ENCODE measurements at regions of chr3 and their contacts with region 1.

Region 1: DNA sequence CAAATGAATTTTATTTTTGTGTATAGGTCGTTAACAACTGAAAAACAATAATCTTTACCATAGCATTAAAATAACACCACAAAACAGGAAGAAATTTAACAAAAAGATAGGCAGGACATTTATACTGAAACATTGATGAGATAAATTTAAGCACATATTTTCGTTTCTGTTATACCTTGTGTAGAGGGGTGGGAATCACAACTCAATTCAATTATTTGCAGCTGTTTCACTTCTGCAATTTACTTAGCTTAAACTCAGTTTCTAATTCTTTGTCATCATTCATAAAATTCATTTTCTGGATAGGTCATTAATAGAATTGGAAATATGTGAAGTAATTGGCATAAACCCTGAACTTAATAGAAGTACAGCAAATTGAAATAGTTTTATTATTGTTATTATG is 42.3 kb downstream of the TP63 start:
- DNase-seq: peak; percentile 42
- ATAC-seq: peak; percentile 93
- H3K4me3 ChIP-seq: no peak overlapping the region
- H3K27ac ChIP-seq: no peak overlapping the region
- H3K4me1 ChIP-seq: peaks cover 16% of the 10 kb centered on the region
- H3K27me3 ChIP-seq: no peaks in the 10 kb centered on the region
- CTCF ChIP-seq: no peak
- EP300 ChIP-seq: peak; percentile 62 to 72; a peak in 3 of 4 replicates
- POLR2A ChIP-seq: no peak
- RAD21 ChIP-seq: no peak

Region 2: GRCh38 chr3:189588070-189588820 is 85.3 kb before region 1 on chr3:
- CTCF ChIA-PET with region 1: interaction called, 3 read pairs
- POLR2A ChIA-PET with region 1: no interaction called
- RAD21 ChIA-PET with region 1: interaction called, 5 read pairs
- SMC1A ChIA-PET with region 1: interaction called, 3 read pairs
- in situ Hi-C with region 1: no loop called
- intact Hi-C with region 1: loop called (anchors 5 kb)
- DNase-seq: no peak
- ATAC-seq: no peak
- H3K4me3 ChIP-seq: no peak overlapping the region
- H3K27ac ChIP-seq: 0 out of 2 replicates have a peak overlapping the region, but pooled peaks have one; percentile 26
- H3K4me1 ChIP-seq: peaks cover 18% of the 10 kb centered on the region
- H3K27me3 ChIP-seq: no peaks in the 10 kb centered on the region
- CTCF ChIP-seq: no peak
- EP300 ChIP-seq: no peak
- POLR2A ChIP-seq: no peak
- RAD21 ChIP-seq: no peak

Region 3: GRCh38 chr3:189613122-189613521 is 60.4 kb before region 1 on chr3:
- CTCF ChIA-PET with region 1: no interaction called
- POLR2A ChIA-PET with region 1: no interaction called
- RAD21 ChIA-PET with region 1: no interaction called
- SMC1A ChIA-PET with region 1: no interaction called
- in situ Hi-C with region 1: no loop called
- intact Hi-C with region 1: no loop called
- DNase-seq: no peak
- ATAC-seq: no peak
- H3K4me3 ChIP-seq: no peak overlapping the region
- H3K27ac ChIP-seq: no peak overlapping the region
- H3K4me1 ChIP-seq: no peaks in the 10 kb centered on the region
- H3K27me3 ChIP-seq: no peaks in the 10 kb centered on the region
- CTCF ChIP-seq: no peak
- EP300 ChIP-seq: no peak
- POLR2A ChIP-seq: no peak
- RAD21 ChIP-seq: no peak

Region 4: GRCh38 chr3:189630767-189631372 is 42.7 kb before region 1 on chr3:
- CTCF ChIA-PET with region 1: interaction called, 9 read pairs
- POLR2A ChIA-PET with region 1: interaction called, 3 read pairs
- RAD21 ChIA-PET with region 1: interaction called, 8 read pairs
- SMC1A ChIA-PET with region 1: interaction called, 37 read pairs
- in situ Hi-C with region 1: no loop called
- intact Hi-C with region 1: no loop called
- DNase-seq: peak; percentile 73
- ATAC-seq: peak; percentile 81
- H3K4me3 ChIP-seq: peak overlapping the region; percentile 65
- H3K27ac ChIP-seq: peak overlapping the region; percentile 86
- H3K4me1 ChIP-seq: peaks cover 13% of the 10 kb centered on the region; the same call in 1 of the 2 replicates
- H3K27me3 ChIP-seq: no peaks in the 10 kb centered on the region
- CTCF ChIP-seq: no peak
- EP300 ChIP-seq: peak in 1 of 2 experiments; percentile 41; a peak in 1 of 4 replicates
- POLR2A ChIP-seq: no peak
- RAD21 ChIP-seq: 0 out of 2 replicates have a peak, but pooled peaks have one; percentile 6

Region 5: GRCh38 chr3:189685854-189686253 is 12.3 kb after region 1 on chr3:
- CTCF ChIA-PET with region 1: interaction called, 16 read pairs
- POLR2A ChIA-PET with region 1: no interaction called
- RAD21 ChIA-PET with region 1: no interaction called
- SMC1A ChIA-PET with region 1: interaction called, 13 read pairs
- in situ Hi-C with region 1: no loop called
- intact Hi-C with region 1: no loop called
- DNase-seq: no peak
- ATAC-seq: no peak
- H3K4me3 ChIP-seq: no peak overlapping the region
- H3K27ac ChIP-seq: no peak overlapping the region
- H3K4me1 ChIP-seq: no peaks in the 10 kb centered on the region
- H3K27me3 ChIP-seq: no peaks in the 10 kb centered on the region
- CTCF ChIP-seq: no peak
- EP300 ChIP-seq: no peak
- POLR2A ChIP-seq: no peak
- RAD21 ChIP-seq: no peak

Region 6: GRCh38 chr3:190155752-190156151 is 482.2 kb after region 1 on chr3:
- CTCF ChIA-PET with region 1: no interaction called
- POLR2A ChIA-PET with region 1: no interaction called
- RAD21 ChIA-PET with region 1: no interaction called
- SMC1A ChIA-PET with region 1: no interaction called
- in situ Hi-C with region 1: no loop called
- intact Hi-C with region 1: no loop called
- DNase-seq: no peak
- ATAC-seq: peak; percentile 58
- H3K4me3 ChIP-seq: no peak overlapping the region
- H3K27ac ChIP-seq: no peak overlapping the region
- H3K4me1 ChIP-seq: no peaks in the 10 kb centered on the region
- H3K27me3 ChIP-seq: no peaks in the 10 kb centered on the region
- CTCF ChIP-seq: no peak
- EP300 ChIP-seq: no peak
- POLR2A ChIP-seq: no peak
- RAD21 ChIP-seq: no peak